GM12878 (cell line): ENCODE measurements at regions of chr20 and their contacts with region 1.

Region 1: GRCh38 chr20:43749734-43750294 is 23.0 kb upstream of the GTSF1L start:
- DNase-seq: peak; percentile 13
- ATAC-seq: peak; percentile 45
- H3K4me3 ChIP-seq: no peak overlapping the region
- H3K27ac ChIP-seq: peak overlapping the region; percentile 84
- H3K4me1 ChIP-seq: peaks cover 34% of the 10 kb centered on the region
- H3K27me3 ChIP-seq: no peaks in the 10 kb centered on the region
- CTCF ChIP-seq: peak; percentile 96 to 99 (median 98); a peak in 5 of 6 replicates
- EP300 ChIP-seq: no peak
- POLR2A ChIP-seq: no peak
- RAD21 ChIP-seq: peak; percentile 95

Region 2: DNA sequence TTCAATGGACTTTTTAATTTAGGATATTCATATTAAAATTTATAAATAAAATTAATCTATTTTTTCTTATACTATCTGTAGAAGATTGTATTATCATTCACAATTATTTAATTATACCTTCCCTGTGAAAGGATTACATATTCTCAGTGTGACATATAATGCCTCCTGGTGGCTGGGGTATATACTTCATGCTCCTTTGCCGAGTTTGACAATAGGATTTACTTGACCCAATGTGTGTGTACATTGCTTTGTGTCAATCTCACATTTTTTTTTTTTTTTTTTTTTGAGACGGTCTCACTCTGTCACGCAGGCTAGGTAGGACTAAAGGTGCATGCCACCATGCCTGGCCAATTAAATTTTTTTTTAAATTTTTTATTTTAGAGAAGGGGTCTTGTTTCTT is 1901.6 kb before region 1 on chr20:
- CTCF ChIA-PET with region 1: no interaction called
- POLR2A ChIA-PET with region 1: no interaction called
- RAD21 ChIA-PET with region 1: no interaction called
- SMC1A ChIA-PET with region 1: no interaction called
- in situ Hi-C with region 1: no loop called
- intact Hi-C with region 1: no loop called
- DNase-seq: no peak
- ATAC-seq: no peak
- H3K4me3 ChIP-seq: no peak overlapping the region
- H3K27ac ChIP-seq: no peak overlapping the region
- H3K4me1 ChIP-seq: no peaks in the 10 kb centered on the region
- H3K27me3 ChIP-seq: no peaks in the 10 kb centered on the region
- CTCF ChIP-seq: no peak
- EP300 ChIP-seq: no peak
- POLR2A ChIP-seq: no peak
- RAD21 ChIP-seq: 0 out of 2 replicates have a peak, but pooled peaks have one; percentile 5

Region 3: DNA sequence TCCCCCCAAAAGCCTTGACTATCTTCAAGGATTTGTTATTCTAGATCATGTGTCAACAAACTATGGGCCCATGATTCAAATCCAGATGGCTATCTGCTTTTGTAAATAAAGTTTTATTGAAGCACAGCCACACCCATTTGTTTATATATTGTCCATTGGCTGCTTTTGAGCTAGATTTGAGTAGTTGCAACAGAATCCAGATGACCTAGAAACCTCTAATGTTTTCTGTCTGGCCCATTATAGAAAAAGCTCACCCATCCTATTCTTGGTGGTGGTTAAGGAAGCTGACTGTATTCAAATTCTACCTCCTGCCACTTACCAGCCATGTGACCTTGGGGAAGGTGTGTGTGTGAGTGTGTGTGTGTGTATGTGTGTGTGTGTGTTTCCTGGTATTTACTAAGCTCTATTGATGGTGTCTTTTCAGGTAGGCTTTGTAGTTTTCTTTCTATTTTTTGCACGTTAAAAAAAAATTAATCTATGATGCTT is 21.7 kb before region 1 on chr20:
- CTCF ChIA-PET with region 1: interaction called, 64 read pairs
- POLR2A ChIA-PET with region 1: no interaction called
- RAD21 ChIA-PET with region 1: interaction called, 6 read pairs
- SMC1A ChIA-PET with region 1: interaction called, 12 read pairs
- in situ Hi-C with region 1: no loop called
- intact Hi-C with region 1: no loop called
- DNase-seq: peak; percentile 58
- ATAC-seq: peak; percentile 69
- H3K4me3 ChIP-seq: no peak overlapping the region
- H3K27ac ChIP-seq: no peak overlapping the region
- H3K4me1 ChIP-seq: peaks cover 11% of the 10 kb centered on the region
- H3K27me3 ChIP-seq: no peaks in the 10 kb centered on the region
- CTCF ChIP-seq: no peak
- EP300 ChIP-seq: 0 out of 4 replicates have a peak, but pooled peaks of 1 of the 2 experiments have one; percentile 14
- POLR2A ChIP-seq: no peak
- RAD21 ChIP-seq: no peak

Region 4: DNA sequence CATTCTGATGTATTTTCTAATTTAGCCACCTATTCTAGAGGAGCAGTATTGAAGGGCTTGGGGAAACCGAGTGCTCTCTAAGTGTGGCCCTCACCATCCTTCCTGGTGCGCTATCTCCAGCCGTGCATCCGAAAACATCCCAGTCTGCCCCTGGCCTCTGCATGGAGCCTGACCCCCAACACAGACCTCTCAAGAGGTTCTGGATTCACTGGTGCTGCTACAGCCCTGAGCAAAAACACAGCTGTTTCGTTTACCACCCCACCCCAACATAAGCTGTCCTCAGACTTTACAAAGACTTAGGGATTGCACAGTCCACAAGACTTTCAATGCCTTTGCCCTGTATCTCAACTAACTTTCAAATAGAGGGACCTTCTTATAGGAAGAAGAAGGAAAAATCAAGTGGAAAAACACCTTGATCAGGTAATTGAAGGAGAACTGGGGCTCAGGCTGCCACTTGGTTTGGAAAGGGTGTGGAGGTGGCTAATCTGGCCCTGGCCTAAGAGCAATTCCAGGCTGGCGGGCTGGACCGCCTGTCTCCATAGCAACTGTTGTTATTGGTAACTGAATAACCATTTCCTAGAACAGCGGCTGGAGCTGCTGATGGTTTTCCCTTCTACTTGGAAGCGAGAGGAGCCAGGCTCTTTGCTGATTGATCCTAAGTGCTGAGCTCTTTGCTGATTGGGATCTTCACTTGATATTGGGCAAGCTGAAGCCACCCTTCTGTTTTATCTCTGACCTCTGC is 74.7 kb after region 1 on chr20:
- CTCF ChIA-PET with region 1: interaction called, 13 read pairs
- POLR2A ChIA-PET with region 1: no interaction called
- RAD21 ChIA-PET with region 1: interaction called, 26 read pairs
- SMC1A ChIA-PET with region 1: interaction called, 15 read pairs
- in situ Hi-C with region 1: no loop called
- intact Hi-C with region 1: loop called (anchors 1 kb)
- DNase-seq: no peak
- ATAC-seq: peak; percentile 5
- H3K4me3 ChIP-seq: no peak overlapping the region
- H3K27ac ChIP-seq: no peak overlapping the region
- H3K4me1 ChIP-seq: peaks cover 24% of the 10 kb centered on the region
- H3K27me3 ChIP-seq: no peaks in the 10 kb centered on the region
- CTCF ChIP-seq: no peak
- EP300 ChIP-seq: no peak
- POLR2A ChIP-seq: no peak
- RAD21 ChIP-seq: no peak

Region 5: DNA sequence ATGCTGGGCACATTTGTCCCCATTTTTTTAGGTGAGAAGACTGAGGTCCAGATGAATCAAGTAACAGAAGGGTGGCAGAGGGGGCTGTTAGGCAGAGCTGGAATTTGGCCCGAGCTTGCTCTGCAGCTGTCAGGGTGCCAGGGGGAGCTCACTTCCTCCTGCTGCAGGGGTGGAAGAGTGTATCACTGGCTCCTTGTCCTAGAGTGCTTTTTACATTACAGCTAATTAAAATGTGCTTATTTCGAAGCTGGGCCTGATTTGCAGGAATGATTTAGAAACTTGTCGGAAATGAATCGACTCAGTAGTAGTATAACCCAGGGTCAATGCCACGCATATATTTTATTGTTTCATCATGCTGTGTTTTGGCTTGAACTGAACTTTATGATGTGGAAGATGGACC is 176.0 kb after region 1 on chr20:
- CTCF ChIA-PET with region 1: interaction called, 40 read pairs
- POLR2A ChIA-PET with region 1: interaction called, 7 read pairs
- RAD21 ChIA-PET with region 1: interaction called, 57 read pairs
- SMC1A ChIA-PET with region 1: interaction called, 56 read pairs
- in situ Hi-C with region 1: no loop called
- intact Hi-C with region 1: no loop called
- DNase-seq: no peak
- ATAC-seq: peak; percentile 54
- H3K4me3 ChIP-seq: no peak overlapping the region
- H3K27ac ChIP-seq: no peak overlapping the region
- H3K4me1 ChIP-seq: peaks cover 36% of the 10 kb centered on the region
- H3K27me3 ChIP-seq: no peaks in the 10 kb centered on the region
- CTCF ChIP-seq: peak in 2 of 3 experiments; percentile 8 to 36; a peak in 2 of 6 replicates
- EP300 ChIP-seq: no peak
- POLR2A ChIP-seq: no peak
- RAD21 ChIP-seq: peak; percentile 24; the same call in 1 of the 2 replicates

Region 6: GRCh38 chr20:43963872-43964791 is 214.3 kb after region 1 on chr20:
- CTCF ChIA-PET with region 1: interaction called, 4 read pairs
- POLR2A ChIA-PET with region 1: no interaction called
- RAD21 ChIA-PET with region 1: interaction called, 4 read pairs
- SMC1A ChIA-PET with region 1: interaction called, 12 read pairs
- in situ Hi-C with region 1: no loop called
- intact Hi-C with region 1: no loop called
- DNase-seq: no peak
- ATAC-seq: peak; percentile 76
- H3K4me3 ChIP-seq: no peak overlapping the region
- H3K27ac ChIP-seq: no peak overlapping the region
- H3K4me1 ChIP-seq: peaks cover 15% of the 10 kb centered on the region
- H3K27me3 ChIP-seq: no peaks in the 10 kb centered on the region
- CTCF ChIP-seq: no peak
- EP300 ChIP-seq: no peak
- POLR2A ChIP-seq: no peak
- RAD21 ChIP-seq: no peak

Region 7: DNA sequence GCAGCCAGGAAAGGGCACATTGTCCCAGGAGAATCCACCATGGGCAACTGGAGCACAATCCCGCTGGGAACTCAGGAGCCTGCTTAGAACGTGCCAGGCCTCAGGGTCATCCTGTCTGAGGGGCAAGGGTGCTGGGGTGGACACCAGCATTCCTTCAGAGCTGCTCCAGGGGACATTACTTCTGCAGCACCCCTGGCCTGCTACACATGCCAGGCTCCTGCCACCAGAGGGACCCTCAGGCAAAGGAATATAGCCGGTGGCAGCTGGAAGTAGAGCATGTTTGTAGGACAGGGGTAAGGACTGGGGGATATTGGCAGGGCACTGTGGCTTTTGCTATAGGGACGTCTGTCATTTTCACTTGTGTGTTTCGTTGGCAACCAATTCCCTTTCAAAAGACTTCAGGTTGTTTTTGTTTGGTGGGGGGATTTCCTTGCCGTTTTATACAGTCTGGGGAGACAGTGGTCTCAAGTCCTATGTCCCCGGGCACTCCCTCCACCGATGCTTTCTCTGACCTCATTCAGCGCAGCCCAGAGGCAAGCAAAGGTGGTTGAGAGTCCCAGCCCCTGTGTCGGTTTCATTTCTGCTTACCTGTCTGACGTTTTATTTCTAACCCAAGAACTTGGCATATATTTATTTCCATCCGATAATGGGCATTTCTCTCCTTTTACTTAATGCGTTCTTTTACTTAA is 306.3 kb after region 1 on chr20:
- CTCF ChIA-PET with region 1: interaction called, 4 read pairs
- POLR2A ChIA-PET with region 1: no interaction called
- RAD21 ChIA-PET with region 1: interaction called, 11 read pairs
- SMC1A ChIA-PET with region 1: interaction called, 8 read pairs
- in situ Hi-C with region 1: no loop called
- intact Hi-C with region 1: no loop called
- DNase-seq: no peak
- ATAC-seq: peak; percentile 93
- H3K4me3 ChIP-seq: no peak overlapping the region
- H3K27ac ChIP-seq: no peak overlapping the region
- H3K4me1 ChIP-seq: no peaks in the 10 kb centered on the region
- H3K27me3 ChIP-seq: no peaks in the 10 kb centered on the region
- CTCF ChIP-seq: peak; percentile 38 to 53 (median 47); a peak in 4 of 6 replicates
- EP300 ChIP-seq: no peak
- POLR2A ChIP-seq: no peak
- RAD21 ChIP-seq: peak; percentile 72